ENCODE measurements at regions of chr16 and their contacts with region 1.

Region 1: DNA sequence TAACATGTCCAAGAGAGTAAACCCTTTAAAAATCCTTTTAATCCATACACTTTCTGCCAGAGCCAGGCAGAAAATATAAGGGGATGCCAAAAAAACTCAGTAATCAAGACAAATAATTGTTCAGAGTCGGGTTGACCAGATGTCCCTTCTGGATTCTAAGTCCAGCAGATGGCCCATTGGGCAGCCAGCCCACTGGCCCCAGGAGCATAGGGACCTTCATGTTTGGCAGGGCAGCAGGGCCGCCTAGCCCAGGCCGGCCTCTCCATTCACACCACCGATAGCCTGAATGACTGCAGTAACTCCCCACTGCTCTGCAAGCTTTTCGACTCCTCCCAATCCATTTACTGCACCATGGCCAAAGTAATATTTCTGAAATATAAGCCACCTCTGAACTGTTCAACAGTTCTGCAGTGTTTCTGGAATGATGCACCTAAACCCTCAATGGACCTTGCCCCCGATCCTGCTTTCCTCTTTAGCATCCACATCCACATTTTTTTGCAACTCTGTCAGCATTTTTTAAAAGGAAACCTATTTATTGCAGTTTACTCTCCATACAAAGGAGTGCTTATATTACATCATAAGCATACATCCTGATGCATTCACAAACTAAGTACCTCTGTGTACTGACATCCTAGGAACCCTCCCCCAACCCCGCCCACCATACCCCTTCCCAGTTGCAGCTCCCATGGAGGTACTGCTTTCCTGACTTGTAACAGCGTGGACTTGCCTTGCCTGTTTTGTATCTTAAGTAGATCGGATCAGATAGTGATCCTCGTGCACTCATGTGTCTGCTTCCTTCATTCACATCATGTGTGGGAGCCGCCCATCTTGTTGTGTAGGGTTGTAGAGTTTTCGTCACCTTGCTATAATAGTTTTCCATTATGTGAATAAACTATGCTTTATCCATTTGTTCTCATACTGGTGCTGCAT is 46.3 kb downstream of the LDHD start:
- DNase-seq: peak; percentile 86 to 93
- H3K4me3 ChIP-seq: no peak overlapping the region
- H3K4me3 Mint-ChIP-seq: peak overlapping the region; percentile 63
- H3K27ac Mint-ChIP-seq: peak overlapping the region; percentile 91
- H3K4me1 ChIP-seq: peaks cover 66% of the 10 kb centered on the region
- H3K4me1 Mint-ChIP-seq: peaks cover 55% of the 10 kb centered on the region
- H3K27me3 ChIP-seq: no peaks in the 10 kb centered on the region
- H3K27me3 Mint-ChIP-seq: no peaks in the 10 kb centered on the region
- CTCF ChIP-seq: no peak

Region 2: DNA sequence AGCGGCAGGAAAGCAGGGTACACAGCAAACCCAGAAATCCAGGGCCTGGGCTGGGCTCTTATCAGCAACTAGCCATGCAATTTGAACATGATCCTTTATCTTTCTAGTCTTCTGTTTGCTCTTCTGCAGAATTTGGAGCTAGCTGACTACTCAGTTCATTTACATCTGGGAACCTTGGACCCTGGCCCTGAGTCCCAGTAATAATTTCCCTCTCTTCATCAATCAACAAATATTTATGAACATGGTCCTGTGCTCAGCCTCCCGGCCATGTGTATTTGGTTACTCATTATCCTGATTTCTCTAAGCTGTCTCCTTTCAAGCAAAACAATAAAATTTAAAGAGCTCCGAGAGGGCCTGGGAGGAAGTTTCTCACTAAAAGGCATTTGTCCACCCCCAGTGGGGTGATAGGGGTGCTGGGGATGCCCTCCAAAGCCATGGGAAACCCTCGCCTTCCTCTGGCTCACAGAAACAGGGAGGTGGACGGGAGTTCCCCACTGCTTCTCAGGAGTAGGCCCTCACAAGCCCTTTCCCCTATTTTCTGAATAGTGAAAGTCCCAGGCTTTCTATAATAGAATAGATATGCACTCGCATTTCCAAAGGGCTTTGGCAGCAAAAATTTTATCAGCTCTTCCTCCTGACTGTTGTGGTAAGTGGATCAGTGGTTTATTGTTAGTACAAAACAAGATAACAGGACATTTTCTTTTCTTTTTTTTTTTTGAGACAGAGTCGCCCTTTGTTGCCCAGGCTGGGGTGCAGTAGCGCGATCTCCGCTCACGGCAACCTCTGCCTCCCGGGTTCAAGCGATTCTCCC is 78.5 kb before region 1 on chr16:
- CTCF ChIA-PET with region 1: interaction called, 5 read pairs
- POLR2A ChIA-PET with region 1: no interaction called
- intact Hi-C with region 1: loop called (anchors 2 kb)
- DNase-seq: peak; percentile 85 to 88
- H3K4me3 ChIP-seq: 0 out of 2 replicates have a peak overlapping the region, but pooled peaks have one; percentile 10
- H3K4me3 Mint-ChIP-seq: peak overlapping the region; percentile 64
- H3K27ac Mint-ChIP-seq: peak overlapping the region; percentile 50
- H3K4me1 ChIP-seq: peaks cover 67% of the 10 kb centered on the region
- H3K4me1 Mint-ChIP-seq: peaks cover 40% of the 10 kb centered on the region
- H3K27me3 ChIP-seq: no peaks in the 10 kb centered on the region
- H3K27me3 Mint-ChIP-seq: no peaks in the 10 kb centered on the region
- CTCF ChIP-seq: no peak

Region 3: GRCh38 chr16:74998481-74999218 is 71.6 kb before region 1 on chr16 and contains the start of gene ZNRF1:
- CTCF ChIA-PET with region 1: interaction called, 6 read pairs
- POLR2A ChIA-PET with region 1: no interaction called
- intact Hi-C with region 1: loop called (anchors 1 kb)
- DNase-seq: peak; percentile 92 to 94
- H3K4me3 ChIP-seq: peak within 1 kb of the TSS; percentile 88
- H3K4me3 Mint-ChIP-seq: peak within 1 kb of the TSS; percentile 95
- H3K27ac Mint-ChIP-seq: peak within 1 kb of the TSS; percentile 85
- H3K4me1 ChIP-seq: peaks cover 57% of the 10 kb centered on the region
- H3K4me1 Mint-ChIP-seq: peaks cover 55% of the 10 kb centered on the region
- H3K27me3 ChIP-seq: no peaks in the 10 kb centered on the region
- H3K27me3 Mint-ChIP-seq: no peaks in the 10 kb centered on the region
- CTCF ChIP-seq: peak; percentile 89 to 95
- total RNA-seq, gene ZNRF1: 68.6 and 73.8 TPM in 2 replicates

Region 4: DNA sequence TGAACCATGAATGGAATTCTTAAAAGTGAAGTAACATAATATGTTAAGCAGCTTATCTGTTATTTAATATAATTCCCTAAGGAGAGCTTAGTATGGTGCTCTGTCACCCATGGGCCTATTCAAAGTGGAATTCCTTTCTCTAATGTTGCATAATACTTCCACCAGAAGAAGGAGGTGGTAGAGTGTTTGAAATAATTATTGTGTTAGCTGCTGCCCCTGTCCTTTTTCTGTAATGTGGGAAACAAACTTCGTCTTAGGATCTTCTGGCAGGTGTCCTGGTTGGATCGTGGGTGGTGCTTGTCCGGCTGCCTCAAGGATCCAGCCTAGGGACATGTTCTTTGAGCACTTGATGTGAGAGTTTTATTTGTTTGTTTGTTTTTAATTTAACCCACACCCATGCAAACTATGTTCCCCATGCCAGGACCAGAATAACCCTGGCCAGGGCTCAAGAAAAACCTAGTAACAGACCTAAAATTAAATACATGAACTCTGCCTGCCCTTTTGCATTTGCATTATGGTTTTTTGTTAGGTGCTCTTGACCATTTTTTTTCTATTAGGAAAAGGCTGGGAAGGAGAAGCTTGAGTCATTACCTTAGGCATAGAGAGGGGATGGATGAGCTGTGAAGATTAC is 25.4 kb before region 1 on chr16:
- CTCF ChIA-PET with region 1: interaction called, 13 read pairs
- POLR2A ChIA-PET with region 1: interaction called, 5 read pairs
- intact Hi-C with region 1: no loop called
- DNase-seq: no peak
- H3K4me3 ChIP-seq: no peak overlapping the region
- H3K4me3 Mint-ChIP-seq: no peak overlapping the region
- H3K27ac Mint-ChIP-seq: no peak overlapping the region
- H3K4me1 ChIP-seq: no peaks in the 10 kb centered on the region
- H3K4me1 Mint-ChIP-seq: peaks cover 4% of the 10 kb centered on the region
- H3K27me3 ChIP-seq: no peaks in the 10 kb centered on the region
- H3K27me3 Mint-ChIP-seq: no peaks in the 10 kb centered on the region
- CTCF ChIP-seq: no peak

Region 5: GRCh38 chr16:75058806-75059205 is 11.5 kb before region 1 on chr16:
- CTCF ChIA-PET with region 1: no interaction called
- POLR2A ChIA-PET with region 1: interaction called, 5 read pairs
- intact Hi-C with region 1: loop called (anchors 1 kb)
- DNase-seq: no peak
- H3K4me3 ChIP-seq: no peak overlapping the region
- H3K4me3 Mint-ChIP-seq: peak overlapping the region; percentile 19
- H3K27ac Mint-ChIP-seq: peak overlapping the region; percentile 77
- H3K4me1 ChIP-seq: peaks cover 28% of the 10 kb centered on the region
- H3K4me1 Mint-ChIP-seq: peaks cover 17% of the 10 kb centered on the region
- H3K27me3 ChIP-seq: no peaks in the 10 kb centered on the region
- H3K27me3 Mint-ChIP-seq: no peaks in the 10 kb centered on the region
- CTCF ChIP-seq: no peak

Region 6: GRCh38 chr16:75096663-75097119 is 26.4 kb after region 1 on chr16:
- CTCF ChIA-PET with region 1: interaction called, 7 read pairs
- POLR2A ChIA-PET with region 1: interaction called, 12 read pairs
- intact Hi-C with region 1: loop called (anchors 1 kb)
- DNase-seq: peak; percentile 85 to 90
- H3K4me3 ChIP-seq: no peak overlapping the region
- H3K4me3 Mint-ChIP-seq: no peak overlapping the region
- H3K27ac Mint-ChIP-seq: peak overlapping the region; percentile 84
- H3K4me1 ChIP-seq: peaks cover 30% of the 10 kb centered on the region
- H3K4me1 Mint-ChIP-seq: peaks cover 24% of the 10 kb centered on the region
- H3K27me3 ChIP-seq: no peaks in the 10 kb centered on the region
- H3K27me3 Mint-ChIP-seq: no peaks in the 10 kb centered on the region
- CTCF ChIP-seq: peak; percentile 79 to 87

Region 7: DNA sequence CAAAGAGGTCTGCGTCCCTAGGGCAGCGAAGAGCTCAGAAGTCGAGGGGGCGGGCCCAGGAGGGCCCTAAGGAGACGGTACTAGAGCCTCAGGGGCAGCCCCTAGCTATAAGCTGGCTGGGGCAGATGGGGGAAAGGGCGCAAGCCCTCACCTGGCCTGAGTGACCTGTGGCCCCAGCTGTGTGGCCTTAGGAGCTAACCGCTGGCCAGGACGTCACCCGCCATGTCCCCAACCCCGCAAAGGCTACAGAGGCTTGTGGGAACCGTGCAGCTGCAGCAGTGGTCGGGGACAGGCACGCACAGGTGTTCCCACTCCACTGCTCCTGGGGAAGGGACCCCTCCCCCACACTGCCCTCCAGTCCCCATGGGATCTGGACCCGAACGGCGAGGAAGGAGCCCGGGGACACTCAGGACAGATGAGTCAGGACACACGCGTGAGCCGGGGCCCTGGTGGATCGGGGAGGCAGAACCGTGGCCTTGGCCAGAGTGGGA is 138.7 kb after region 1 on chr16:
- CTCF ChIA-PET with region 1: no interaction called
- POLR2A ChIA-PET with region 1: no interaction called
- intact Hi-C with region 1: no loop called
- DNase-seq: no peak
- H3K4me3 ChIP-seq: no peak overlapping the region
- H3K4me3 Mint-ChIP-seq: no peak overlapping the region
- H3K27ac Mint-ChIP-seq: no peak overlapping the region
- H3K4me1 ChIP-seq: no peaks in the 10 kb centered on the region
- H3K4me1 Mint-ChIP-seq: no peaks in the 10 kb centered on the region
- H3K27me3 ChIP-seq: no peaks in the 10 kb centered on the region
- H3K27me3 Mint-ChIP-seq: no peaks in the 10 kb centered on the region
- CTCF ChIP-seq: no peak

Measured in Caco-2 (cell line).